Panc1 (cell line): ENCODE measurements at regions of chr7 and their contacts with region 1.

Region 1: GRCh38 chr7:47571331-47572093 is 10.4 kb downstream of the TNS3 start:
- DNase-seq: no peak
- ATAC-seq: peak; percentile 69
- H3K4me3 ChIP-seq: peak overlapping the region in 1 of 2 experiments; percentile 36; a peak in 2 of 4 replicates
- H3K27ac ChIP-seq: peak overlapping the region; percentile 100
- H3K4me1 ChIP-seq: peaks cover 95% of the 10 kb centered on the region
- H3K27me3 ChIP-seq: no peaks in the 10 kb centered on the region
- CTCF ChIP-seq: no peak

Region 2: DNA sequence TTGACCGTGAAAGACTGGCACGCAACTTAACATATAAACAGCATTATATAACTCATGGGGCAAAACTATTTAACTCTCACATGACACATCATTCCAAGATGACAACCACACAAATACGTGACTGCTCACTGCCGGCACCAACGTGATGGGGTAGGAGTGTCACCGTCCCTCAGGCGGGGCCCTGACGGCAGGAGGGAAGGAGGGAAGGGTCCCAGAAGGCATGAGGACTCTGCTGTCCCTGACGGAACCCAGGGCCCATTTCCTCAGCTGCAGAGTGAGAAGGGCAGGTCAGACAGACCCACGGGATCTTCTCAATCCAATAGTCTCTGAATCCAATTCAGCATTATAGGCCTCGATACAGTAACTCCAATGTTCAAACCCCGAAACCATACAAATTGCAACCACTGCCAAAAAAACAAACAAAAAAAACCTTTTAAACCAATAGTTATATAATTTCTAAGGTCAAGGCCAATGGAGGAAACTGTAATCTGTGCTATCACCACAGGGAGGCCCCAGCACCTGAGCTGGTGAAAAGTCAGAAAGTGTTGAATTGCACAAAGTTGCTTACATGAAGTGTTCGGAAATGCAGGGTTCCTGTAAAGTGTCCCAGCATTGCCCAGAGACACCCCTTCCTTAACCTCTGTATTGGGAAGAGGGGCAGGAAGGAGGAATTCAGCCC is 127.0 kb before region 1 on chr7:
- CTCF ChIA-PET with region 1: no interaction called
- POLR2A ChIA-PET with region 1: interaction called, 12 read pairs
- in situ Hi-C with region 1: no loop called
- intact Hi-C with region 1: no loop called
- DNase-seq: no peak
- ATAC-seq: no peak
- H3K4me3 ChIP-seq: no peak overlapping the region
- H3K27ac ChIP-seq: peak overlapping the region; percentile 41
- H3K4me1 ChIP-seq: peaks cover 96% of the 10 kb centered on the region
- H3K27me3 ChIP-seq: no peaks in the 10 kb centered on the region
- CTCF ChIP-seq: no peak

Region 3: DNA sequence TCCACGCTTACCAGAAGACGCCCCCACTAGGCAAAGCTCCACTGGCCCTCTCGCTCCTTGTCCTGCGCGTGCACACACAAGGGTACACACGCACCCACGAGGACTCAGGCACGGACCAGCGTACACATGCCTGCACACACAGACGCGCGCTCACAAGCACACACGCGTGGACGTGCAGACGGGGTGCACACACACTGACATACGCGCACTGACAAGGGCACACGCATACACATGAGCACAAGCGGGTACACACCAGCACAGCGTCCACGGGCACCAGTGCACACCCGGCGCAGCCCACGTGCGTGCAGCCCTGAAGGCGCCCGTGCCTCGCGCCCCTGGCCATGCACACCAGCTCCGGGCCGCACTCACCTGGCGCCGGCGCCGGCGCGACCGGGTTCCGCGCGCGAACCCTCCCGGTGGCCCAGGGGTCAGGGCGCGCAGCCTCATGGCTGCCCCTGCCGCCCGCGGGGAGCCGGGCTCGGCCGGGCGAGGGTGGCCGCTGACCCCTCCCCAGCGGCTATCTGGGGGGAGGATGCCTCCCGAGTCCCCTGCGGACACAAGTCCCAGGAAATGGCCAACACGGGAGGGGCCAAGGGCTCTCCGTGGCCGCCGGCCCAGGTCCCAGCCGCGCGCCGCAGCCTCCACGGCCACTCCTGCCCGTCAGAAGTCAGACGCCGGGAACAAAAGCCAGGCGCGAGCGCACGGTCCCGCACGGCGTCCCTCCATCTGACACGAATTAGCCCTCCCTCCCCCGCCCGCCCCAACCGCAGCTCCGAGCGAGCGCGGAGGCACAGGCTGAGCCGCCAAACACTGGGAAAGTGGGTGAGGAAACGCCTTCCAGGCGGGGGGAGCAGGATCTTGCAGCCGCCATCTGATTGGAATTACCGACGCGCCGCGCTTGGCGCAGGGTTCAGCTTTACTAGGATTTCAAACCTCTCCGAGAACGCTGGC is 34.6 kb before region 1 on chr7:
- CTCF ChIA-PET with region 1: interaction called, 4 read pairs
- POLR2A ChIA-PET with region 1: no interaction called
- in situ Hi-C with region 1: no loop called
- intact Hi-C with region 1: loop called (anchors 5 kb)
- DNase-seq: no peak
- ATAC-seq: peak; percentile 22
- H3K4me3 ChIP-seq: peak overlapping the region; percentile 42 to 66
- H3K27ac ChIP-seq: peak overlapping the region; percentile 99
- H3K4me1 ChIP-seq: peaks cover 87% of the 10 kb centered on the region
- H3K27me3 ChIP-seq: no peaks in the 10 kb centered on the region
- CTCF ChIP-seq: no peak

Region 4: DNA sequence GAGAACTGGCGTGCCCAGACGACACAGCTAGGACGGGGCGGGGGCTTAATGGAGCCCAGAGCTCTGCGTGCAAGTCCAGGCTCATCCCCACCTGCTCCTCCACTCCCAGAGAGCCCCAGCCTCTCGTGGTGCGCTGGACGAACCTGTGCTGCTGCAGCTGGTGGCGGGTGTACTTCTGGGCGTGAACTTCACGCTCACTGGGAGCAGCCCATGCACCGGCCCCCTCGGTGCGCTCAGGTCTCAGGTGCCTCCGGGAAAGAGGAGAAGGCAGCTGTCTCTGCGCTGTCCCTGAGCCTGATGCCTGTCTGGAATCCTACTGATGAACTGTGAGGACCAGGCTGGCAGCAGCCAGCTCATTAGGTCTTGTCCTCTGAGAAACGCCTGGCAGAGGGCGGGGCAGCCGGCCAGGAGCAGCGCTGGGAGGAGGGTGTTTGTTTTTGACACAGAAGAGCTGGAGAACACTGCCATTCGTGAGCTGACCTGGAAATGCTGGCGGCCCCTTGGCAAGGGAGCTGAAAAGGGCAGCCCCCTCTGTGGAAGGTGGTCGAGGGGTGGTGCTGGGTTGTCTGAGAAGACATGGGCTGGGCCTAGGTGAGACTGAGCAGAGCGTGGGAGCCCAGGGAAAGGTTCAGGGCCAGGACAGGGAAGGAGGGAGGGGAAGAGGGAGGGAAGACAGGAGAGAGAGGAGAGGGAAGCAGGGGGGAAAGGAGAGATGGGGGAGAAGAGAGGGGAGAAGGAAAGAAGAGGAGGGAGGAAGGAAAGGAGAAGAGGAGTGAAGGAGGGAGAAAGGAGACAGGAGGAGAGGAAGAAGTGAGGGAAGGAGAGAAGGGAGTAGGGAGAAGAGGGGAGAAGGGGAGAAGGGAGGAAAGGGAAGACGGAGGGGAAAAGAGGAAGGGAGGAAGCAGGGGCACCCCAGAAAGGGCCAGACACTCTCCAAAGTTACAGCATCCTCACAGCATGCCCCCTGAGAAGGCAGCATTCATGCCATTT is 63.9 kb after region 1 on chr7:
- CTCF ChIA-PET with region 1: no interaction called
- POLR2A ChIA-PET with region 1: interaction called, 11 read pairs
- in situ Hi-C with region 1: no loop called
- intact Hi-C with region 1: loop called (anchors 5 kb)
- DNase-seq: no peak
- ATAC-seq: peak; percentile 81
- H3K4me3 ChIP-seq: peak overlapping the region; percentile 29 to 53
- H3K27ac ChIP-seq: peak overlapping the region; percentile 96
- H3K4me1 ChIP-seq: peaks cover 77% of the 10 kb centered on the region
- H3K27me3 ChIP-seq: no peaks in the 10 kb centered on the region
- CTCF ChIP-seq: no peak

Region 5: GRCh38 chr7:47818796-47819606 is 247.5 kb after region 1 on chr7:
- CTCF ChIA-PET with region 1: interaction called, 6 read pairs
- POLR2A ChIA-PET with region 1: no interaction called
- in situ Hi-C with region 1: no loop called
- intact Hi-C with region 1: loop called (anchors 5 kb)
- DNase-seq: peak; percentile 82
- ATAC-seq: peak; percentile 90
- H3K4me3 ChIP-seq: no peak overlapping the region
- H3K27ac ChIP-seq: peak overlapping the region; percentile 96
- H3K4me1 ChIP-seq: peaks cover 48% of the 10 kb centered on the region
- H3K27me3 ChIP-seq: no peaks in the 10 kb centered on the region
- CTCF ChIP-seq: peak; percentile 96

Region 6: DNA sequence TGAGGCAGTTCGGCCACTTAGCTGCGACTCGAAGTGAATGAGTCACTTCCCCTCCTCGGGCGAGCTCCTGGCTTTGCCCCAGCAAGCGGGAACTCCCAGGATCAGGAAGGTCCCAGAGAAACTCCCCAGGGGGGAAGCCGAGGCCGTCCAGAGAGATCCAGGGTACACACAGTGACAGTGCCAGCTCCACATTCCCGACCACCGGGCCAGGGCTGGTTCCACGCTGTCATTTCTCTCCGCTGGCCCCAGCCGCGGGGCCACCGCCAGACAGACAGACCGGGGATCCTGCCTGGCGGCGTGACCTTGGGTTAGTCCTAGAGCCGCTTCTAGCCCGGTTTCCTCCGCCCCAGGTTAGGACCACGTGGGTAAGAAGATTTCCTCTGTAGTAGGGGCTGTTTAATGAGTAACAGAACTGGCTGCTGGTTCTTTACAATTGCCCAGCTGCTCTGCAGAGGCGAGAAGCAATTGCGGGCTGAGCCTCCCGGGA is 517.1 kb after region 1 on chr7:
- CTCF ChIA-PET with region 1: no interaction called
- POLR2A ChIA-PET with region 1: no interaction called
- in situ Hi-C with region 1: no loop called
- intact Hi-C with region 1: loop called (anchors 10 kb)
- DNase-seq: peak; percentile 91
- ATAC-seq: peak; percentile 72
- H3K4me3 ChIP-seq: peak overlapping the region; percentile 57 to 87
- H3K27ac ChIP-seq: peak overlapping the region; percentile 100
- H3K4me1 ChIP-seq: peaks cover 73% of the 10 kb centered on the region
- H3K27me3 ChIP-seq: no peaks in the 10 kb centered on the region
- CTCF ChIP-seq: no peak